ENCODE measurements at regions of chr11 and their contacts with region 1.

Region 1: GRCh38 chr11:10878408-10879214 is 20.8 kb upstream of the ZBED5 start:
- DNase-seq: no peak
- H3K4me3 ChIP-seq: no peak overlapping the region
- H3K27ac ChIP-seq: no peak overlapping the region
- H3K4me1 ChIP-seq: peaks cover 0 to 2% (median 0%) of the 10 kb centered on the region in 4 experiments; a peak in 1 of 7 replicates
- H3K27me3 ChIP-seq: no peaks in the 10 kb centered on the region
- CTCF ChIP-seq: peak in 2 of 3 experiments; percentile 60 to 86; a peak in 3 of 4 replicates
- EP300 ChIP-seq: no peak
- POLR2A ChIP-seq: no peak
- RAD21 ChIP-seq: peak; percentile 38 to 55; a peak in 3 of 4 replicates

Region 2: GRCh38 chr11:10366568-10367370 is 511.8 kb before region 1 on chr11:
- CTCF ChIA-PET with region 1: no interaction called
- POLR2A ChIA-PET with region 1: no interaction called
- DNase-seq: peak; percentile 87 to 90
- H3K4me3 ChIP-seq: no peak overlapping the region
- H3K27ac ChIP-seq: peak overlapping the region; percentile 4; the same call in 1 of the 2 replicates
- H3K4me1 ChIP-seq: peaks cover 0 to 10% (median 1%) of the 10 kb centered on the region in 4 experiments; a peak in 3 of 7 replicates
- H3K27me3 ChIP-seq: no peaks in the 10 kb centered on the region
- CTCF ChIP-seq: peak; percentile 87 to 99 (median 87)
- EP300 ChIP-seq: peak in 1 of 2 experiments; percentile 60; a peak in 1 of 3 replicates
- POLR2A ChIP-seq: no peak
- RAD21 ChIP-seq: peak; percentile 95 to 98

Region 3: DNA sequence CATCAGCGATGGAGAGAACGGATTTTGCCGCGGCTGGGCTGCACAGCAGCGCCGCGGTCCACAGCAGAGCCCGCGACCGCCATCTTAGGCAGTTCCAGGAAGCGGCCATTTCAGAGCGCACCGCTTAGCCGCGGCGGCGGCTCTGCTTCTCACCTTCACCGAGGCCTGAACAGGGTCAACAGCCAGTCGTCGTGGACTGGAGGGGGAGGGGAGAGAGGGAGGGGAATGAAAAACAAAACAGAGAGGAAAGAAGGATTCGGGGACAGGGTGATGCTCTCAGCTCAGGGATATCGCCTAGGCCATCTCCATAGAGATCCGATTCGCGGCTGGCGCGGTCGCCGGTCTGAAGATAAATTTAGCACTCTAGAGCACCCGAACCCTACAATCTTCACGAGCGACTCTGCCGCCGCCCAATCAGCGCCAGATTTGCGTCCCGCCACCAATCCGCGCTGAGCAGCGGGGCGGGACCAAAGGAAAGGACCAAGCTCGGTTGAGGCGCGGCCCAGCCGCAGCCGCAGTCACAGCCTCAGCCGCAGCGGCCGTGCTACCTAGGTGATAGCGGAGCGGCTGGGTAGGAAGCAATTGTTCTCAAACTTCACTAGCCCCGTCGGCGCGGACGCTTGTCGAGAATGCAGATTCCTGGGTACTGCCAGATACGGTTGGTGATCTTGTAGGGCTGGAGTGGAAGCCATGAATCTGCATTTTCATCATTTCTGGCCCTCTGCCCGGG is 20.7 kb before region 1 on chr11 and contains the start of gene ZBED5:
- CTCF ChIA-PET with region 1: interaction called, 11 read pairs
- POLR2A ChIA-PET with region 1: interaction called, 10 read pairs
- DNase-seq: peak; percentile 92 to 94
- H3K4me3 ChIP-seq: peak within 1 kb of the TSS; percentile 91 to 98 (median 95)
- H3K27ac ChIP-seq: peak within 1 kb of the TSS; percentile 88
- H3K4me1 ChIP-seq: peaks cover 0 to 8% (median 2%) of the 10 kb centered on the region in 4 experiments; a peak in 3 of 7 replicates
- H3K27me3 ChIP-seq: no peaks in the 10 kb centered on the region
- CTCF ChIP-seq: no peak
- EP300 ChIP-seq: no peak
- POLR2A ChIP-seq: peak in 1 of 2 experiments; percentile 88; a peak in 2 of 3 replicates
- RAD21 ChIP-seq: 0 out of 4 replicates have a peak, but pooled peaks have one; percentile 4
- total RNA-seq, gene ZBED5: 48.7 and 54.2 TPM in 2 replicates

Region 4: GRCh38 chr11:10868375-10868774 is 10.2 kb before region 1 on chr11:
- CTCF ChIA-PET with region 1: no interaction called
- POLR2A ChIA-PET with region 1: no interaction called
- DNase-seq: no peak
- H3K4me3 ChIP-seq: no peak overlapping the region
- H3K27ac ChIP-seq: no peak overlapping the region
- H3K4me1 ChIP-seq: no peaks in the 10 kb centered on the region
- H3K27me3 ChIP-seq: no peaks in the 10 kb centered on the region
- CTCF ChIP-seq: no peak
- EP300 ChIP-seq: no peak
- POLR2A ChIP-seq: no peak
- RAD21 ChIP-seq: no peak

Measured in H1 (cell line).